MCF 10A (cell line): ENCODE measurements at regions of chr4 and their contacts with region 1.

Region 1: DNA sequence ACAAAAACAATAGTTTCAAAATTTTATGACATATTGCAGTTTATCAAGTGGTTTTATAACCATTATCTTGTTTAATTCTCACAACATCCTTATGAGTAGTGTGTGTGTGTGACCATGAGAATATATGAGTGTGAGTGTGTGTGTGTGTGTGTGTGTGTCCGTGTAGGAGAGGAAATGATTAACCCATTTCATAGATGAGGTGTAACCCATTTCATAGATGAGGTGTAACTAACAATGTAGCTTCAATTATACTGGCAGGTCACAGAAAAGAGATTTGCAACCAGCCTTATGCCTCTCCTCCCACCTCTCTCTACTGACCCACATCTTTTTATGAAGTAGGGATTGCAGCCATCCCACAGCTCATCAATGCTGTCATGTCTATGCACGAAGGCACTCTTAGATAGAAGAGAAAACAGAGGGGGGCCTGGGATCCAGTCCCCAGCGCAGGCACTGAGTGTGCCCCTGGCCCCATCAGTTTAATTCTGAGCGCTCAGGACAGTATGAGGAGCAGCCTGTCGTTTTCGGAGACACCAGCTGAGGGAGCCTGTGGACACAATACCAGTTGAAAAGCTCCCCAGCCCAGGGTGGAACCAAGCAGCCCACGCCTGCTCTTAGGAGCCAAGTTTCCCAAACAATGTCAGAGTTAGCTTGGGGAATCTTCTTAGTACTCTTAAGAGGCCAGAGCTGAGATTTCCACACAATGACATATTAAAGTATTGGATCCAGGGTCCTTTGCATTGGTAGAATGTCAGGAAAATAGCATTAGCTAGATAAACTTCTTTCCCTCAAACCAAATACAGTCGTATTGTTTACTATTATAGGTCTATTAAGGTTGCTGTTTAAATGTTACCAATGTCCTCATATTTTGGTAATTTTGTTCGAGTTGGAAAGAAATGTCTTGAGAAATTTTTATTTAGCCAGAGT is 88.6 kb downstream of the PALLD start:
- DNase-seq: peak; percentile 89
- H3K4me3 Mint-ChIP-seq: no peak overlapping the region
- H3K27ac Mint-ChIP-seq: no peak overlapping the region
- H3K4me1 Mint-ChIP-seq: peaks cover 45% of the 10 kb centered on the region
- H3K27me3 Mint-ChIP-seq: no peaks in the 10 kb centered on the region
- CTCF ChIP-seq: peak; percentile 84

Region 2: DNA sequence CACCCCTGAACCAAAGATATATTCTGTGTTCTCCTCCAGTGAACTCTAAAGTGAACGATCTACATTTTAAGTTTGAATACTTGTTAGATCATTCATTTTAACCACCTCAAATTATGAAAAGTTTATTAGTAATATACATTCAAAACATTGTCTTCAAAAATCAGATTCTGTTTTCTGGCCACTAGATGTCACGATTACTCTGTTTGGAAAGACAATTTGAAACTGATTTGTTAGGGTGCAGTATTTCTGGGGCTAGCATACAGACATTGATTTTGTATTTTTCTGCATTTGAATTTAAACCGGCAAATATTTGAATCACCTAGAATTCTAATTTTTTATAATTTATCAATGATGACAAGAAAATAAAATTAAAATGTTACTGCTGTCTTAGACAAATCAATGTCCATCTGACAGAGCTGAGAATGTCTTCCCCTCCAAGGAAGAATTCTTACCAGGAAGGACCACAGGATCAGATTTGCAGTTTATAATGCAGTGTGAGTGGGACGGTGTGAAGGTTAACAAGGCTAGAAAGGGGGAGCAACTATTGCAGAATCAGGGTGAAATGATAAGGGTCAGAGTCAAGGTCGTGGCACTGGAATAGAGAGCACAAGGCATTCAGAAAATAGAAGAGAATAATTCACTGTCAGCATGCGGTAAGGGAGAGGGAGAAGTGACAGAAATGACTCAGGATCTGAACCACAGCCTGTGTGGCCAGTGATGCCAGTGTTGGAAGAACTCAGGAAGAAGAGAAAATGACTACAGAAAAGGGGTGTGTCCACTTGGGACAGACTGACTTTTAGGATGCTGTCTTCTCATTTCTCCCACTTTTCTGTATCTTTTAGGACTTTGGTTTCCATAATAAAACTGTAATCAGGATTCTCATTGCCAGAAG is 401.5 kb before region 1 on chr4:
- CTCF ChIA-PET with region 1: no interaction called
- POLR2A ChIA-PET with region 1: no interaction called
- intact Hi-C with region 1: loop called (anchors 1 kb)
- DNase-seq: peak; percentile 50
- H3K4me3 Mint-ChIP-seq: no peak overlapping the region
- H3K27ac Mint-ChIP-seq: peak overlapping the region; percentile 4
- H3K4me1 Mint-ChIP-seq: no peaks in the 10 kb centered on the region
- H3K27me3 Mint-ChIP-seq: no peaks in the 10 kb centered on the region
- CTCF ChIP-seq: peak; percentile 66

Region 3: GRCh38 chr4:168496834-168497233 is 88.6 kb before region 1 on chr4 and contains the start of gene PALLD:
- CTCF ChIA-PET with region 1: no interaction called
- POLR2A ChIA-PET with region 1: no interaction called
- intact Hi-C with region 1: no loop called
- DNase-seq: no peak
- H3K4me3 Mint-ChIP-seq: no peak within 1 kb of the TSS
- H3K27ac Mint-ChIP-seq: no peak within 1 kb of the TSS
- H3K4me1 Mint-ChIP-seq: no peaks in the 10 kb centered on the region
- H3K27me3 Mint-ChIP-seq: no peaks in the 10 kb centered on the region
- CTCF ChIP-seq: no peak
- total RNA-seq, gene PALLD: 94.6 and 191 TPM in 2 replicates

Region 4: DNA sequence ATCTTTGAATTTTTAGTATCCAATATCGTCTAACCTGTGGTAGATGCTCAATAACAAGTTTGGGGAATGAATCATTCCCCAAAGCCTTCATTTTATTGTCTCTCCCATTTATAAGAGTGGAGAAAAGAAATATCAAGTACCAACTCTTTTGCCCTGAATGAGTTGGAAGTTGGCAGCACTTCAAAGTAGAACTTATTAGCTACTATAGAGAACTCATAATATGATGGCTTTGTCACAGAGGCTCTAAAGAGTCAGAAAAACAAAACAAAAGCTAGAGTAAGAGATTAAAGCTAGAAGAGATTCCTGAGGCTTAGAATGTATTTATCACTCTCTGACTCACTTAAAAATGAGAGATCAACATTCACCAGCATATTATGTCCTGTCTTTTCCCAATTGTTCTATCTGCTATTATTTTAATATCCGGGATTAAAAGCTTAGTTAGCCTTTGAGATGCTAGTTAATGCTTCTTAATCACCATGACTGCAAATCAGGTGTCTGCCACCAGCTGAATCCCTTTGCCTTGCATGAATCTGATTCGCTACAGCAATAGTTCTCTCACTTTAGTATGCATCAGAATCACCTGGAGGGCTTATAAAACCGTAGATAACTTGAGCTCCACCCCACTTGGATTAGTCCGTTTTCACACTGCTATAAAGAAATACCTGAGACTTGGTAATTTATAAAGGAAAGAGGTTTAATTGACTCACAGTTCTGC is 10.7 kb before region 1 on chr4:
- CTCF ChIA-PET with region 1: interaction called, 10 read pairs
- POLR2A ChIA-PET with region 1: interaction called, 3 read pairs
- intact Hi-C with region 1: no loop called
- DNase-seq: no peak
- H3K4me3 Mint-ChIP-seq: no peak overlapping the region
- H3K27ac Mint-ChIP-seq: no peak overlapping the region
- H3K4me1 Mint-ChIP-seq: peaks cover 13% of the 10 kb centered on the region
- H3K27me3 Mint-ChIP-seq: no peaks in the 10 kb centered on the region
- CTCF ChIP-seq: no peak

Region 5: GRCh38 chr4:168656055-168656660 is 70.7 kb after region 1 on chr4:
- CTCF ChIA-PET with region 1: interaction called, 15 read pairs
- POLR2A ChIA-PET with region 1: interaction called, 21 read pairs
- intact Hi-C with region 1: loop called (anchors 1 kb)
- DNase-seq: peak; percentile 92
- H3K4me3 Mint-ChIP-seq: no peak overlapping the region
- H3K27ac Mint-ChIP-seq: peak overlapping the region; percentile 49
- H3K4me1 Mint-ChIP-seq: peaks cover 34% of the 10 kb centered on the region
- H3K27me3 Mint-ChIP-seq: no peaks in the 10 kb centered on the region
- CTCF ChIP-seq: no peak

Region 6: GRCh38 chr4:168831919-168832762 is 246.7 kb after region 1 on chr4:
- CTCF ChIA-PET with region 1: interaction called, 15 read pairs
- POLR2A ChIA-PET with region 1: interaction called, 23 read pairs
- intact Hi-C with region 1: loop called (anchors 2 kb)
- DNase-seq: peak; percentile 85
- H3K4me3 Mint-ChIP-seq: peak overlapping the region; percentile 93
- H3K27ac Mint-ChIP-seq: peak overlapping the region; percentile 97
- H3K4me1 Mint-ChIP-seq: peaks cover 24% of the 10 kb centered on the region
- H3K27me3 Mint-ChIP-seq: no peaks in the 10 kb centered on the region
- CTCF ChIP-seq: no peak

Region 7: DNA sequence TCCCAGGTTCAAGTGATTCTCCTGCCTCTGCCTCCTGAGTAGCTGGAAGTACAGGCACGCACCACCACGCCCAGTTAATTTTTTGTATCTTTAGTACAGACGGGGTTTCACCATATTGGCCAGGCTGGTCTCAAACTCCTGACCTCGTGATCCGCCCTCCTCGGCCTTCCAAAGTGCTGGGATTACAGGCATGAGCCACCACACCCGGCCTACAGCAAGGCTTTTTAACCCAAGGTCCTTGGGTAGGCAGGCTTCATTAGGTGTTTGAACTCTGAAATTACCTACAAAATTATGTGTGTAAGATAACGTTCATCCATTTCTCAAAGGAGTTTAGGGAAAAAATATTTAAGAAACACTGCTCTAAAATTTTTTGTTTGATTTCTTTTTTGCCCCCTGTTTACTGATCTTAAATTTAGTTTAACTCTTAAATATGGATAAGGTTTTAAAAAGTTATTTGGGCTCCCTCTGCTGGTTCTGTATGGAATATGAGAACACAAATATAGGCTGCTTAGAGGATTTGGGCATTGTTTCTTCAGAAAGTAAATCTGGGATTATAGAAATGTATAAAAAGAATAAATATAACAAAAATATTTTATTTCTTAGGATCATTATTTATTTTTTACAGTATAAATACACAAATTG is 331.8 kb after region 1 on chr4:
- CTCF ChIA-PET with region 1: interaction called, 47 read pairs
- POLR2A ChIA-PET with region 1: interaction called, 5 read pairs
- intact Hi-C with region 1: loop called (anchors 1 kb)
- DNase-seq: peak; percentile 64
- H3K4me3 Mint-ChIP-seq: no peak overlapping the region
- H3K27ac Mint-ChIP-seq: no peak overlapping the region
- H3K4me1 Mint-ChIP-seq: peaks cover 5% of the 10 kb centered on the region
- H3K27me3 Mint-ChIP-seq: no peaks in the 10 kb centered on the region
- CTCF ChIP-seq: peak; percentile 52

Region 8: GRCh38 chr4:169010125-169011023 is 424.9 kb after region 1 on chr4 and contains the start of gene CBR4:
- CTCF ChIA-PET with region 1: no interaction called
- POLR2A ChIA-PET with region 1: no interaction called
- intact Hi-C with region 1: loop called (anchors 2 kb)
- DNase-seq: peak; percentile 98
- H3K4me3 Mint-ChIP-seq: peak within 1 kb of the TSS; percentile 94
- H3K27ac Mint-ChIP-seq: peak within 1 kb of the TSS; percentile 97
- H3K4me1 Mint-ChIP-seq: peaks cover 30% of the 10 kb centered on the region
- H3K27me3 Mint-ChIP-seq: no peaks in the 10 kb centered on the region
- CTCF ChIP-seq: peak; percentile 34
- total RNA-seq, gene CBR4: 19.2 and 24.0 TPM in 2 replicates